ENCODE measurements at regions of chr5 and their contacts with region 1.

Region 1: DNA sequence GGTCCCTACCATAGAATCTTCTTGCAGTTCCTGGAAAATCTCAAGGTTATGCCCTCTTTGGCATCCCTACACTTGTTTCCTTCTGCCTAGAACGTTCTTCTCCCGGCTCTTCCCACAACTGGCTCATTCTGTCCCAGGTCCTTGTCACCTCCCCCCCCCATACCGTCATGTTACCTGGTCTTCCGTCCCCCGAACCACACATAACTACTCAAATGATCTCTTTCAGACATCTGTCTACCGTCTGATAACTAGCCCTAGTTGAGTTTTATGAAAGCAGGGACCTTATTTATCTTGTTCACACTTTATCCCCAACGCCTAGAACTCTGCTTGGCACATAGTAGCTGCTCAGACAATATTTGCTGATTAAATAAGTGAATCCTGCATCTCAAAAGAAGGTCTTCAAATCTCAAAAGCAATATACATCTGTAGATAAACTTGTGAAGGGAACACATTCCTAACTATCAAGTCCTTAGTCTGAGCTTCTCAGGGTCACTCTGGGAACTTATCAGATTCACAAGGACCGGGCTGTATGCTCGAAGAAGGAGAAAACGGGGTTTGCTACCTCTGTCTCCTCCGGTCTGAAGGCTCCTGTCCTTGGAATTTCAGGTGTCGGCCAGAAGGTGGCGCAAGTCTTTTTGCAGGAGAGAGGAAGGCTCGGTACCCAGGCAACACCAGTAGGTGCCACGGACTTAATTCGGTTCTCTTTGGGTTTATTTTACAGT is 30.0 kb downstream of the LCP2 start:
- DNase-seq: peak; percentile 90
- H3K4me3 Mint-ChIP-seq: no peak overlapping the region
- H3K27ac Mint-ChIP-seq: no peak overlapping the region
- H3K4me1 Mint-ChIP-seq: peaks cover 6% of the 10 kb centered on the region
- H3K27me3 Mint-ChIP-seq: peaks cover 47% of the 10 kb centered on the region
- CTCF ChIP-seq: peak; percentile 91

Region 2: DNA sequence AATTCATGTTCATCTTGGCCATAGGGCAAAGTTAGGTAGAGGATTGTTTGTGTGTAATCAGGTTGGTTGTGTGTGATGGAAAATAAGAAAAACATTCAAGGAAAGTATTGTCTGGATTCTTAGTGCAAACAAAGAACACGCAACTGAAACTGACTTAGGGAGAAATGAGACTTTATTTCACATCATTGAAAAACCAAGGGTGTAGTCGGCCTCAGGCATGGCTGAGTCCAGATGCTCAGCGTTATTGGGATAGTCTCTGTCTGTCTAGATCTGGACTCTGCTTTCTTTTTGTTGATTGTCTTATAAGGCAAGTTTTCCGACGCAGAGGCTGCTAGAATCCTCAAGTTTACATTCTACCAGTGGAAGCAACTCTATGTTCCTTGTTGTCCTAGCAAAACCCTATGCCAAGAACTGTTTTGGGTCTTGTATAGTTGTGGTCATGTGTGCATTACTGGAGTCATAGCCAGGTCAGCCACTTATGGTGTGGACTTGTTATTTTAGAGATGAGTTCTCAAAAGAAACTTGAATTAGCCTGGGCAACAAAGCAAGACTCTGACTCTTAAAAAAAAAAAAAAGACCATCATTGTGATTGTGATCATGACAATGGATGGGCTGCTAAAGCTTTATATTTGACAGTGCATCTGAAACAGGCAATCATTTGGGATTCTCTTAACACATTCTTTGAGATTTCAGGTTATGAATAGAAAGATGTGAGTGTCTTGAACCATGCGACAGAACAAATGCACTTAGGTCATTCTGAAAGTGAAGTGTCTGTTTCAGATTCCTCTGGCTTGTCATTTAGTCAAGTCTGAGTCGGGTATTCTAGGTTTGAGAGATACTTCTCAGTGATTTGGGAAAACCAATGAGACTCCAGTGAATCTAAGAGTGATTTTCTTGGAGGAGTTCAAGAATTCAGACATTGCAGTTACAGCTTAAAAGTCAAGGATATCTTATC is 548.0 kb before region 1 on chr5:
- CTCF ChIA-PET with region 1: no interaction called
- POLR2A ChIA-PET with region 1: no interaction called
- intact Hi-C with region 1: no loop called
- DNase-seq: no peak
- H3K4me3 Mint-ChIP-seq: no peak overlapping the region
- H3K27ac Mint-ChIP-seq: no peak overlapping the region
- H3K4me1 Mint-ChIP-seq: peaks cover 26% of the 10 kb centered on the region
- H3K27me3 Mint-ChIP-seq: no peaks in the 10 kb centered on the region
- CTCF ChIP-seq: no peak

Region 3: GRCh38 chr5:170235876-170236864 is 31.4 kb before region 1 on chr5:
- CTCF ChIA-PET with region 1: interaction called, 13 read pairs
- POLR2A ChIA-PET with region 1: no interaction called
- intact Hi-C with region 1: no loop called
- DNase-seq: no peak
- H3K4me3 Mint-ChIP-seq: no peak overlapping the region
- H3K27ac Mint-ChIP-seq: no peak overlapping the region
- H3K4me1 Mint-ChIP-seq: no peaks in the 10 kb centered on the region
- H3K27me3 Mint-ChIP-seq: peaks cover 22% of the 10 kb centered on the region
- CTCF ChIP-seq: no peak

Region 4: GRCh38 chr5:170253844-170254455 is 13.6 kb before region 1 on chr5:
- CTCF ChIA-PET with region 1: interaction called, 17 read pairs
- POLR2A ChIA-PET with region 1: interaction called, 7 read pairs
- intact Hi-C with region 1: no loop called
- DNase-seq: peak; percentile 89
- H3K4me3 Mint-ChIP-seq: no peak overlapping the region
- H3K27ac Mint-ChIP-seq: no peak overlapping the region
- H3K4me1 Mint-ChIP-seq: no peaks in the 10 kb centered on the region
- H3K27me3 Mint-ChIP-seq: no peaks in the 10 kb centered on the region
- CTCF ChIP-seq: no peak

Region 5: GRCh38 chr5:170293273-170293672 is 25.7 kb after region 1 on chr5:
- CTCF ChIA-PET with region 1: interaction called, 40 read pairs
- POLR2A ChIA-PET with region 1: no interaction called
- intact Hi-C with region 1: no loop called
- DNase-seq: no peak
- H3K4me3 Mint-ChIP-seq: no peak overlapping the region
- H3K27ac Mint-ChIP-seq: no peak overlapping the region
- H3K4me1 Mint-ChIP-seq: no peaks in the 10 kb centered on the region
- H3K27me3 Mint-ChIP-seq: peaks cover 47% of the 10 kb centered on the region
- CTCF ChIP-seq: no peak

Region 6: DNA sequence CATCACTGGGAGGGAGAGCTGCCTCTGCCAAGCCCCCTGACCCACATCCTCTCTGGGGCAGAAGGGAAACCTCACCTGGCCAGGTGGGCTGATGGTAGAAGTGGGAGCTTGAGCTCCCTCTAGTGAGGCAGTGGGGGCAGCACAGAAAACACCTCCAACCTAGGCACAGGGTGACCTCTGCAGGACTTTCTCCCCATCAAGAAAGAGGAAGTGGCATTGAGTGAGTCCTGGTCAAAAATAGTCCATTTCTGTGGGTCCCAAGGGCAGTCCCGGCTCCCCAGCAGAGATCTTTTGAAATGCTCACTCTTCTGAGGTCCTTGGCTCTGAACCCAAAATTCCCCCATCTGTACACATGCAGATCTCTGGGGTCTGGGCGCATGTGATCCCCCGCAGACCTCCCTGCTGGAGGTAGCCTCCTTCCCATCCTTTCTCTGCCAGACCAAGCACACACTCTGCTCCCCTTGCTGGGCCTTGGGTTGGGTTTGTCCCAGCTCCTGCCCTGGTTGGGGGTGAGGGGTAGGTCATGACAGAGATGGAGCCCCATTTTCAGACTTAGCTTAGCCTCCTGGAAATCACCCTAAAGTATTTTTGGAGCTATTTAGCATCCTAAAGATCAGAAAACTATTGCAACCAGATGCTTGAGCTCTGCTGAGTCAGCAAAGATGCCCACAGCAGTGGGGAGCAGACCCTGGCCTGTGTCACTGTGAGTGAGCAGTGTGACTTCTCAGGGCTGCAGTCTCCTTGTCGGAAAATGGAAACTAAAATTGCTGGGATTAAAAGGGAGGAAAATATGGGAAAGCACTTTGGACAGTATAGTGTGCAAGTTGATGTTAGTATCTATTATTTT is 71.6 kb after region 1 on chr5:
- CTCF ChIA-PET with region 1: interaction called, 13 read pairs
- POLR2A ChIA-PET with region 1: no interaction called
- intact Hi-C with region 1: loop called (anchors 1 kb)
- DNase-seq: peak; percentile 66
- H3K4me3 Mint-ChIP-seq: no peak overlapping the region
- H3K27ac Mint-ChIP-seq: no peak overlapping the region
- H3K4me1 Mint-ChIP-seq: peaks cover 6% of the 10 kb centered on the region
- H3K27me3 Mint-ChIP-seq: no peaks in the 10 kb centered on the region
- CTCF ChIP-seq: peak; percentile 46

Region 7: GRCh38 chr5:170420780-170421412 is 153.3 kb after region 1 on chr5:
- CTCF ChIA-PET with region 1: interaction called, 221 read pairs
- POLR2A ChIA-PET with region 1: no interaction called
- intact Hi-C with region 1: loop called (anchors 1 kb)
- DNase-seq: peak; percentile 82
- H3K4me3 Mint-ChIP-seq: no peak overlapping the region
- H3K27ac Mint-ChIP-seq: no peak overlapping the region
- H3K4me1 Mint-ChIP-seq: no peaks in the 10 kb centered on the region
- H3K27me3 Mint-ChIP-seq: peaks cover 45% of the 10 kb centered on the region
- CTCF ChIP-seq: peak; percentile 78

Region 8: DNA sequence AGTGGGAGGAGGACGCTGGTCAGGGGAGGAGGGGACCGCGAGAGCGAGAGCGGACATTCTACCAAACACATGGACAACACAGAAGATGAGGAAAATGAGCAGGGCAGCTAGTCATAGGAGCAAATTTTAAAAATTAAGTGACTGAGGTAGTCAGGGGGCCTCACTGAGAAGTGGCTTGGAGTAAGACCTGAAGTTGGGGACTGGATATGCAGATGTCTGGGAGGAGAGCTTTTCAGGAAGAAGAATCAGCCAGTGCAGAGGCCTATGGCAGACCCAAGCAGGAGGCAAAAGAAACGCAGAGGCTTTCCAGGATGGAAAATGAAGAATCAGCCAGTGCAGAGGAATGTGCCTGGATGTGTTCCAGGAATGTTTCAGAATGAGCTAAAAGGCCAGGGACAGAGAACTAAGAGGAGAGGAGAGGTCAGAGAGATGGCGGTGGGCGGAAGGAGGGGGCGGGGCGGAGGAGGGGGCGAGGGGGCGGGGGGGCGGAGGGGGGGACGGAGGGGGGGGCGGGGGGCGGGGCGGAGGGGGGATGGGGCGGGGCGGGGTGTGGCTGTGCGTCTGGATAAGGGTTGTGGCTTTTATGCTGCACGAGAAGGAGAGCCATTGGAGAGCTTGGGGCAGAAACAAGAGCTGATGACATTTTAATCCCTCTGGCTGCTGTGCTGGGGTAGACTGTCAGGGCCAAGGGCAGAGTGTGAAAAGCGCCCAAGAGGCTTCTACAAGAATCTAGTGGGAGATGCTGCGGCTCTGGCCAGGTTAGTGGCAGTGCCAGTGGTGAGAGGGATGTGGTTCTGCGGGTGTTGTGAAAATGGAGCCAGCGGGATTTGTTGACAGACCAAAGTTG is 365.9 kb after region 1 on chr5:
- CTCF ChIA-PET with region 1: interaction called, 25 read pairs
- POLR2A ChIA-PET with region 1: no interaction called
- intact Hi-C with region 1: no loop called
- DNase-seq: peak; percentile 82
- H3K4me3 Mint-ChIP-seq: peak overlapping the region; percentile 65
- H3K27ac Mint-ChIP-seq: peak overlapping the region; percentile 17
- H3K4me1 Mint-ChIP-seq: peaks cover 20% of the 10 kb centered on the region
- H3K27me3 Mint-ChIP-seq: peaks cover 15% of the 10 kb centered on the region
- CTCF ChIP-seq: no peak

Measured in MCF 10A (cell line).